IMR-90 (cell line): ENCODE measurements at regions of chr4 and their contacts with region 1.

Region 1: DNA sequence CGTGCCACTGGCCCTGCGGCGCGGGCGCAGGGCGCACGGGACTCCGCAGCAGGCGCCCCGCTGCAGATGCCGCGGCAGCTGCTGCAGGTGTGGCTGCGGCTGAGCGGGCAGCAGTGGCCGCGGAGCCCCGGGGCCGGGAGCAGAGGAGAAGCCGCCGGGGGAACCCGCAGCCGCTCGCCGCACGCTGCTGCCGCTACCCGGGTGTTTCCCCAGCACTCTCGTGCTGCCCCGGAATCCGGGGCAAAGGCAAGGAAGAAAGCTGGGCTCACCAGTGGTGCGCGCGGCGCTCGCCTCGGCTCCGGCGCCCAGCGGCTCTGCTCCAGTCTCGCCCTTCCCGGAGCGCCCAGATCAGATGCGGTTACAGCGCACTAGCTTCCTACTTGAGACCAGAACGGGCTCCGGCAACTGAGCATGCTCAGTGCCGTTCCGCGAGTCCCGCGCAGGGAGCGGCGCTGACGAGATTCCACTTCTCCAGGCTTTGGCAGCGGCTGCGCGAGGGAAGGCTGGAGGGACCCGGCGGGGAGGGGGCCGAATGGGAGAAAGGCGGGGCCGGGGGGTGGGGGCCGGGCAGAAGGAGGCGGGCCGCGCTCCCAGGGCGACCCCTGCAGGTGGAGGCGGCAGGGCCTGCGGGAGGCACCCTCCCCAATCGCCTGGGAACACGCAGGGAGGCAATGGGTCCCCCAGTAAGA is at the start of gene APBB2:
- DNase-seq: peak; percentile 97
- ATAC-seq: peak; percentile 87
- H3K4me3 ChIP-seq: peak within 1 kb of the TSS; percentile 68
- H3K27ac ChIP-seq: peak within 1 kb of the TSS; percentile 55
- H3K4me1 ChIP-seq: peaks cover 2% of the 10 kb centered on the region; the same call in 1 of the 2 replicates
- H3K27me3 ChIP-seq: no peaks in the 10 kb centered on the region
- CTCF ChIP-seq: peak; percentile 67
- POLR2A ChIP-seq: peak; percentile 59; the same call in 1 of the 2 replicates
- RAD21 ChIP-seq: peak; percentile 69
- total RNA-seq, gene APBB2: 64.7 and 75.5 TPM in 2 replicates

Region 2: GRCh38 chr4:40325189-40326019 is 888.9 kb before region 1 on chr4:
- CTCF ChIA-PET with region 1: no interaction called
- POLR2A ChIA-PET with region 1: no interaction called
- dilution Hi-C with region 1: no loop called
- in situ Hi-C with region 1: no loop called
- intact Hi-C with region 1: no loop called
- DNase-seq: peak; percentile 72
- ATAC-seq: peak; percentile 77
- H3K4me3 ChIP-seq: no peak overlapping the region
- H3K27ac ChIP-seq: no peak overlapping the region
- H3K4me1 ChIP-seq: peaks cover 4% of the 10 kb centered on the region; the same call in 1 of the 2 replicates
- H3K27me3 ChIP-seq: peaks cover 4% of the 10 kb centered on the region; the same call in 1 of the 2 replicates
- CTCF ChIP-seq: peak; percentile 76
- POLR2A ChIP-seq: no peak
- RAD21 ChIP-seq: peak; percentile 77

Region 3: GRCh38 chr4:40976343-40976742 is 237.9 kb before region 1 on chr4:
- CTCF ChIA-PET with region 1: interaction called, 7 read pairs
- POLR2A ChIA-PET with region 1: interaction called, 7 read pairs
- dilution Hi-C with region 1: no loop called
- in situ Hi-C with region 1: loop called (anchors 5 kb)
- intact Hi-C with region 1: loop called (anchors 1 kb)
- DNase-seq: peak; percentile 70
- ATAC-seq: peak; percentile 31; the same call in 1 of the 2 replicates
- H3K4me3 ChIP-seq: no peak overlapping the region
- H3K27ac ChIP-seq: peak overlapping the region; percentile 13; the same call in 1 of the 2 replicates
- H3K4me1 ChIP-seq: peaks cover 21% of the 10 kb centered on the region
- H3K27me3 ChIP-seq: no peaks in the 10 kb centered on the region
- CTCF ChIP-seq: peak; percentile 67
- POLR2A ChIP-seq: no peak
- RAD21 ChIP-seq: peak; percentile 73

Region 4: DNA sequence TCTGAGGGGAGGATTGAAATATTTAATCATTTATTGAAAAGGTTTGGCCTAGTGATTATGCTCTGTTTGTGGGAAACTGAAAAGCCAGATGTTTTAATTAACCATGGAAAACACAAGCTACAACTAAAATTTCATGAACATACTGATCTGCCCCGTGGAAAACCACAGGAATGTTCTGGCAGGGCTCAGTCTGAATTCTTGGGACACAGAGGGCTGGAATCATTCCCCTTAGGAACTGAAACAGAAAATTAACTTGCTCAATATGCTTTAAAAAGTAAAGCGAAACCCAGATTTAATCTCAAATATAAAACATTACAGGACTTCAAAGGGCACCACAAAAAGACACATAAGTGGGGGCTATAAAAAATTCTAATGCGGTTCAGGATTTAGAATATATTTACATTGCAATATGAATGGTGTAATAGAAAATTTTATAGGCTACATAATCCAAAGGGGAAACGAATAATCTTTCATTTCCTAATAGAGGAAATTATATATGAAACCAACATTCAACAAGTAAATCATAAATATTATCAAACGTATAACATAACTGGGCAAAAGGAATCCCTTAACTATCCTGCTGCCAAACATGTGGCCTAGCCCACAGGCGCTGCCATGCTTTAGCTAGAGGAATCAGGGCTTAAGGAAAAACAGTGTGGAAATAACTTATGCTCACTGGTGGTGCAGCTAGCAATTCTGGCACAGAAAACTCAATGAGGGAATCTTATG is 70.8 kb before region 1 on chr4:
- CTCF ChIA-PET with region 1: no interaction called
- POLR2A ChIA-PET with region 1: no interaction called
- dilution Hi-C with region 1: no loop called
- in situ Hi-C with region 1: no loop called
- intact Hi-C with region 1: loop called (anchors 1 kb)
- DNase-seq: peak; percentile 92
- ATAC-seq: peak; percentile 78
- H3K4me3 ChIP-seq: no peak overlapping the region
- H3K27ac ChIP-seq: peak overlapping the region; percentile 97
- H3K4me1 ChIP-seq: peaks cover 35% of the 10 kb centered on the region
- H3K27me3 ChIP-seq: no peaks in the 10 kb centered on the region
- CTCF ChIP-seq: no peak
- POLR2A ChIP-seq: no peak
- RAD21 ChIP-seq: no peak

Region 5: GRCh38 chr4:41177016-41177415 is 37.3 kb before region 1 on chr4:
- CTCF ChIA-PET with region 1: no interaction called
- POLR2A ChIA-PET with region 1: no interaction called
- dilution Hi-C with region 1: no loop called
- in situ Hi-C with region 1: no loop called
- intact Hi-C with region 1: loop called (anchors 2 kb)
- DNase-seq: peak; percentile 84
- ATAC-seq: peak; percentile 71
- H3K4me3 ChIP-seq: no peak overlapping the region
- H3K27ac ChIP-seq: peak overlapping the region; percentile 70; the same call in 1 of the 2 replicates
- H3K4me1 ChIP-seq: peaks cover 10% of the 10 kb centered on the region
- H3K27me3 ChIP-seq: no peaks in the 10 kb centered on the region
- CTCF ChIP-seq: peak; percentile 42
- POLR2A ChIP-seq: no peak
- RAD21 ChIP-seq: peak; percentile 42

Region 6: DNA sequence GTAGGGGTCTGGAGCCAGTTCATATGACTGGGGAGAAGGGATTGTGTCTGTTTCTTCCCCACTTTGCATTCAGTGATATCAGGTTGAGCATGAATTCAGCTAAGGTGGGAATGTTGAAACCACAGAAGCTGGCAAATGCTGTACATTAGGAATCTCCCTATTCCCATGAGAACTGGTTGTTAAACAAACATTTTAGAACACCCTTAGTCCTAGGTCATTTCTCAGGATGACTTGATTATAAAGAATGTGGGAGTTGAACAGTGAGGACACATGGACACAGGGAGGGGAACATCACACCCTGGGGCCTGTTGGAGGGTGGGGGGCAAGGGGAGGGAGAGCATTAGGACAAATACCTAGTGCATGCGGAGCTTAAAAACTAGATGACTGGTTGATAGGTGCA is 261.1 kb after region 1 on chr4:
- CTCF ChIA-PET with region 1: no interaction called
- POLR2A ChIA-PET with region 1: no interaction called
- dilution Hi-C with region 1: no loop called
- in situ Hi-C with region 1: no loop called
- intact Hi-C with region 1: no loop called
- DNase-seq: no peak
- ATAC-seq: no peak
- H3K4me3 ChIP-seq: no peak overlapping the region
- H3K27ac ChIP-seq: no peak overlapping the region
- H3K4me1 ChIP-seq: no peaks in the 10 kb centered on the region
- H3K27me3 ChIP-seq: no peaks in the 10 kb centered on the region
- CTCF ChIP-seq: no peak
- POLR2A ChIP-seq: no peak
- RAD21 ChIP-seq: no peak